Activated CD4-positive, alpha-beta T cell treated with anti-CD3 and anti-CD28 coated beads, Interleukin-2, amount 10 ng/mL, durations not matched to agents 24 days and 14 days (primary cell): ENCODE measurements at regions of chr7 and their contacts with region 1.

Region 1: GRCh38 chr7:32846701-32847100 is 44.9 kb downstream of the KBTBD2 start:
- DNase-seq: peak; percentile 95
- H3K4me3 Mint-ChIP-seq: peak overlapping the region; percentile 26
- H3K27ac Mint-ChIP-seq: no peak overlapping the region
- H3K4me1 Mint-ChIP-seq: peaks cover 9% of the 10 kb centered on the region
- H3K27me3 Mint-ChIP-seq: peaks cover 27% of the 10 kb centered on the region

Region 2: DNA sequence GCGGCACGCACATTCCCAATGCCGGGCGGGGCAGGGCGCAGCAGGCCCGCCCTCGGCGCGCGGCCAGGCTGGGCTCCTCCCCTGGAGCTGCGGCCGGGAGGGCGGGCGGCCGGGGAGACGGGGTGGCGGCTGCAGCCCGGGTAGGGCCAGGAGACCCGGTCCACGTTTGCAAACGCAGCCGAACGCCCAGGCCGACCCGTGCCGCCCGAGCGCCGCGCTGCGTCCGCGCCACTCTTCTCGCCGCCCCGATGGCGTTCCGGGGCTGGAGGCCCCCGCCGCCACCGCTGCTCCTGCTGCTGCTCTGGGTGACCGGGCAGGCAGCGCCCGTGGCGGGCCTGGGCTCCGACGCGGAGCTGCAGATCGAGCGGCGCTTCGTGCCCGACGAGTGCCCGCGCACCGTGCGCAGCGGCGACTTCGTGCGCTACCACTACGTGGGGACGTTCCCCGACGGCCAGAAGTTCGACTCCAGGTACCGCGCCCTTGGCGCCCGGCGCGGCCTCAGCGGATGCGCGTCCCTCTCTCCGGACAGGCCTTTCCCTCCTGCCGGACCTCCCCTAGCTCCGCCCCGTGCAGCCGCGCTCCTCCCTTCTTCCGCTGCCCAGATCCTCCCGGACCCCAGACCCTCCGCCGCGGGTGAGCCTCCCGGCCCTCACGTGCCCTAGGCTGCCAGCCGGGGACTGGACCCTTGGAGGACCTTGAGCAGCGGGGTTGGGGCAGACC is 110.8 kb after region 1 on chr7 and contains the start of gene FKBP9:
- intact Hi-C with region 1: loop called (anchors 5 kb)
- DNase-seq: peak; percentile 75
- H3K4me3 Mint-ChIP-seq: peak within 1 kb of the TSS; percentile 84
- H3K27ac Mint-ChIP-seq: no peak within 1 kb of the TSS
- H3K4me1 Mint-ChIP-seq: peaks cover 3% of the 10 kb centered on the region
- H3K27me3 Mint-ChIP-seq: peaks cover 25% of the 10 kb centered on the region
- total RNA-seq, gene FKBP9: 0.93 and 1.3 TPM in 2 replicates